BJ (cell line): ENCODE measurements at regions of chr5 and their contacts with region 1.

Region 1: GRCh38 chr5:149442563-149443182 is 63.6 kb upstream of the IL17B start:
- DNase-seq: no peak
- H3K4me3 ChIP-seq: no peak overlapping the region
- H3K27me3 ChIP-seq: no peaks in the 10 kb centered on the region
- CTCF ChIP-seq: peak; percentile 96

Region 2: GRCh38 chr5:149317281-149318048 is 125.2 kb before region 1 on chr5:
- CTCF ChIA-PET with region 1: interaction called, 10 read pairs
- POLR2A ChIA-PET with region 1: no interaction called
- DNase-seq: no peak
- H3K4me3 ChIP-seq: no peak overlapping the region
- H3K27me3 ChIP-seq: no peaks in the 10 kb centered on the region
- CTCF ChIP-seq: peak; percentile 70

Region 3: DNA sequence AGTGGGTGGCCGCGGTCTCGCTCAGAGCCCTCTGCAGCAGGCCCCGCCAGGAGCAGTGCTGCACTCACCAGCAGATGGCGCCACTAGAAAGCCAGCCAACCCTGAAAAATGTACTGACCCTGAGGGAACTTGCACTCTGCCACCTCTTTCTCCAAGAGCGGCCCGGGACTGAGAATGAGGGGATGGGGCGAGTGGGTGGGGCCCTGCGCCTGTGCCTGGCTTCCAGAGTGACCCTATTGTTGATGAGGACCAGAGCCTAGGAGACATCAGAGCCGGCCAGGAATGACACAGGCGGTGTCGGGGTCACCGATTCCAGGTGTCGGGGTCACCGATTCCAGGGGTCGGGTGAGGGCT is 60.7 kb before region 1 on chr5:
- CTCF ChIA-PET with region 1: interaction called, 29 read pairs
- POLR2A ChIA-PET with region 1: interaction called, 4 read pairs
- DNase-seq: no peak
- H3K4me3 ChIP-seq: no peak overlapping the region
- H3K27me3 ChIP-seq: peaks cover 1% of the 10 kb centered on the region; the same call in 1 of the 2 replicates
- CTCF ChIP-seq: peak; percentile 95

Region 4: DNA sequence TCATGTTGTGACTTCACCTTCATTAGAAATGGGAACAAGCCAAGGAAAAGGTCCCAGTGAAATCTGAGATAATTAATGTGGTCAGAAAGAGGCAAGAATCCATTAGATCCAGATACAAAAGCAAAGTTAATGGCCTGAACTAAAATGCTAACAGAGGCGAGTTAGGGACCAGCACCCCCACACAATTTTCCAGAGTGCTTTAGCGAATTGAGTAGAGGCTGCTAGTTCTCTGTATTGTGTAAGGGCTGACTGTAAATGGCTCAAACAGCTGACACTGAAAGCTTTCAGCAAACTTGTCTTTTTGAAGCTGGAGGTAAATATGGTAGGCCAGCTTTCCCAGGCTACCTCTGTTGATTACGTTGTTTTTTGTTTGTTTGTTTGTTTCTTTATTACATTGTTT is 33.1 kb after region 1 on chr5:
- CTCF ChIA-PET with region 1: interaction called, 15 read pairs
- POLR2A ChIA-PET with region 1: no interaction called
- DNase-seq: no peak
- H3K4me3 ChIP-seq: no peak overlapping the region
- H3K27me3 ChIP-seq: no peaks in the 10 kb centered on the region
- CTCF ChIP-seq: no peak

Region 5: DNA sequence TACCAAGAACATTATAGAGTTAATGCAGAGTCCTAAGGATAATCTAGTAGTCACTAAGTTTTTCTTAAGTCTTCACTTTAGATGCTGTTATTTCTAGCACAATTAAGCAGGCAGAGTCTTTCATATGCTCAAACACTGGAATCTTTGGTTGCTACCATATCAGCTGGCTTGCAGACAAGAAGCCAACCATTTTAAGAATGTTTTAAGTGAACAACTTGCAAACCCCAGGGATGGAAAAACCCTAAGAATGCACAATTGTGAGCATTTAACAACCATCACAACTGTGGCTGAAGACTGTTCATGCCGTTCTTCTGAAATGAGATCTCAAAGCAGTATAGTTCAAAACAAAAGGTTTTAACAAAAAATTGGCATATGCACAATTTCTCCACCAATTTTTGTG is 53.5 kb after region 1 on chr5:
- CTCF ChIA-PET with region 1: interaction called, 13 read pairs
- POLR2A ChIA-PET with region 1: no interaction called
- DNase-seq: no peak
- H3K4me3 ChIP-seq: no peak overlapping the region
- H3K27me3 ChIP-seq: no peaks in the 10 kb centered on the region
- CTCF ChIP-seq: no peak

Region 6: DNA sequence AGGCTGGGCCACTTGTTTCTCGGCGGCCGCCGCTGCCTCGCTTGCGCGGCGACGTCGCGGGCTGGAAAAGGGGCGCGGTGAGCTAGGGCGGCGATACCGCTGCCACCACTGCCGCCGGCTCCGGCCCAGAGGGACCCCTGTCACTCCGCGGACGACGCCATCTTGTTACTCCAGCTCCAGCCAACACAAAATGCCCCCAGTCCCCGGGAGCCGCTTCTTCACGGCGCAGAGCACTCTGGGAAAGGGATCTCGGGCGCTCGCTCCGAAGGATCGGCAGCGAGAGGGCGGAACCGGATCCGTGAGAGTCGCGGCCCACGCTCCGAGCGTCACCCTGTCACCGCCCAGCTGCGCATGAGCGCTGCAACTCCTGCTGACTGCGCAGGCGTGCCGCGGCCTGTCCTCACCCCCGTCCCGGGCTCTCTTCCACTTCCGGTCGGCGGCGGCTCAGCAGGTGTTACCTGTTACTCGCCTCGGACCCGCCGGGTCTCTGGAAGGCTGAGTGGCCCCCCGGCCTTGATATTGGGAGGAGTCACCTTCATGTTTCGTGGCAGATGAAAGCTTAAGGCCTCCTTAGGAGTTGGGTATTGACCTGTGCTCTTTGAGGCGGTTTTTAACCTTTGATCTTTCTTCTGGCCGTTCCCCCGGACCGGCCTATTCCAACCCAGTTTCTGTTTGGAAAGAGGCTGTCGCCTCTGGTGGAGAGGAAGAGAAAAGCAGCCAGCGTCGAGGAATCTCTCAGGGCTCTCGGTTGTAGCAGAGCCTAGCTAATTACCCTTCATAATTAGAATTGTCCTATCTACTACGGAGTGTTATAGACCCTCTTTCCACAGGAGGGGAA is 108.7 kb after region 1 on chr5 and contains the start of gene CSNK1A1:
- CTCF ChIA-PET with region 1: interaction called, 107 read pairs
- POLR2A ChIA-PET with region 1: interaction called, 3 read pairs
- DNase-seq: peak; percentile 90
- H3K4me3 ChIP-seq: peak within 1 kb of the TSS; percentile 75
- H3K27me3 ChIP-seq: no peaks in the 10 kb centered on the region
- CTCF ChIP-seq: peak; percentile 80
- polyA plus RNA-seq, gene CSNK1A1: 171 and 268 TPM in 2 replicates

Region 7: GRCh38 chr5:149567226-149567625 is 124.6 kb after region 1 on chr5:
- CTCF ChIA-PET with region 1: interaction called, 93 read pairs
- POLR2A ChIA-PET with region 1: interaction called, 8 read pairs
- DNase-seq: no peak
- H3K4me3 ChIP-seq: no peak overlapping the region
- H3K27me3 ChIP-seq: no peaks in the 10 kb centered on the region
- CTCF ChIP-seq: no peak